Right ventricle myocardium superior (tissue), 1 donor: ENCODE measurements at regions of chr9 and their contacts with region 1.

Region 1: GRCh38 chr9:13915591-13916326 is 398.2 kb downstream of the NFIB start:
- DNase-seq: no peak
- ATAC-seq: peak; percentile 68

Region 2: DNA sequence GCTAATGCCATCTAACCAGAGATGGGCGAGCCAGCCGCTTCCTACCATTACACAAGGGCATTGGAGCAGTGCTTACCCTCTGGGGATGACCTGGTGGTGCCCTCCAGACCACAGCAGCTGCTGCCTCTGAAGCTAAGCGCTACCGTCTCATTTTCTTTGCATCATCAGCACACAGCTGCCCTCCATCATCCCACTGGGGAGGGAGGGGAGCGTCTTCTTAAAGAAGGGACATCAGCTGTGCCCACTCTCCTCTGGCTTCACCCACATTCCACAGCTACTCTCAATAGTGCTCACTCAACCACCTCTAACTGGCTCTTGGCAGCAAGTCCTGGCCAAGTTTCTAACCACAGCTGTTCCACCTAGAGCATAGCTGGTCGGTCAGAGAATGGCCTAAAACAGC is 105.2 kb before region 1 on chr9:
- intact Hi-C with region 1: loop called (anchors 10 kb)
- DNase-seq: peak; percentile 24
- ATAC-seq: no peak

Region 3: DNA sequence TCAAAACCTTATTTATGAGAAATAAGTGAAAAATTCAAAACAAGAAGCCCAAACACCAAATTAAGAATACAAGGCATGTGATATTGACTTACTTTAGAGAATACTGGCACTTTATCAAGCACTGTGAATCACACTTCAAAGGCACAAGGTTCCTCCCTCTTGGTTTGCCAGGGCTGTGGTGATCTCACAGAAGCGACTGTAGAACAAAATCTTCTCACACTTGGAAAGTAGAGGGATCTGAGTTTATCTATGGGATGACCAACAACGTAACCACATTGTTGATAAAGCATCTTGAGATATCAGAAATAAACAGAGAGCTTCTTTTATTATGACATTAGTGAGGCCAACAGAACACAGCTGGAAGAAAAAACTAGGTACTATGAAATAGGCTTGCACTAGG is 102.3 kb after region 1 on chr9:
- intact Hi-C with region 1: loop called (anchors 10 kb)
- DNase-seq: no peak
- ATAC-seq: no peak

Region 4: GRCh38 chr9:14056316-14056861 is 140.6 kb after region 1 on chr9:
- intact Hi-C with region 1: no loop called
- DNase-seq: no peak
- ATAC-seq: no peak